Motor neuron (in vitro differentiated cells): ENCODE measurements at regions of chr4 and their contacts with region 1.

Region 1: GRCh38 chr4:83771113-83771705 is 235.3 kb downstream of the GPAT3 start:
- ATAC-seq: peak; percentile 87 to 96 (median 90)
- H3K4me3 ChIP-seq: no peak overlapping the region
- H3K27ac ChIP-seq: no peak overlapping the region
- H3K4me1 ChIP-seq: peaks cover 2 to 22% of the 10 kb centered on the region in 2 donors

Region 2: GRCh38 chr4:82373816-82374625 is 1397.2 kb before region 1 on chr4 and contains the start of gene HNRNPD:
- in situ Hi-C with region 1: no loop called
- ATAC-seq: peak; percentile 82 to 97 (median 95)
- H3K4me3 ChIP-seq: peak within 1 kb of the TSS; percentile 60 to 91 (median 78)
- H3K27ac ChIP-seq: peak within 1 kb of the TSS; percentile 94 to 99
- H3K4me1 ChIP-seq: peaks cover 5 to 27% of the 10 kb centered on the region in 2 donors
- total RNA-seq, gene HNRNPD: 41.5 to 343 (median 120) TPM

Region 3: DNA sequence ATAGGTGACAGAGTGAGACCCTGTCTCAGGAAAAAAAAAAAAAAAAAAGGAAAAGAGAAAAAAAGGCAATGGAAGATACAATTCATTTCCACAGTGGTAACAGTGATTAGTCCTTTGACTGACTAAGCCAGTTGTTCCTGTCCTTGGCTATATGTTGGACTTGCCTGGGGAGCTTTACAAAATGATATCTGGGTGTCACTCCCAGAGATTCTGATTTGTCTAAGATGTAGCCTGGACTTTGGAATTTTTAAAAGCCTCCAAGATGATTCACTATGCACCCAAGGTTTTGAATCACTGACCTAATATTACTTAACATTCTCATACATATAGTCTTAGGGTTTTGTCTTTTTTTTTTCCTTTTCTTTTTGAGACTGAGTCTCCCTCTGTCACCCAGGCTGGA is 332.5 kb before region 1 on chr4:
- in situ Hi-C with region 1: no loop called
- ATAC-seq: no peak
- H3K4me3 ChIP-seq: no peak overlapping the region
- H3K27ac ChIP-seq: no peak overlapping the region
- H3K4me1 ChIP-seq: no peaks in the 10 kb centered on the region

Region 4: GRCh38 chr4:83516042-83516772 is 255.0 kb before region 1 on chr4:
- in situ Hi-C with region 1: loop called in 1 of 9 experiments (anchors 25 kb)
- ATAC-seq: peak in 1 of 8 experiments; percentile 30
- H3K4me3 ChIP-seq: no peak overlapping the region
- H3K27ac ChIP-seq: no peak overlapping the region
- H3K4me1 ChIP-seq: no peaks in the 10 kb centered on the region

Region 5: GRCh38 chr4:83658806-83659495 is 112.3 kb before region 1 on chr4:
- in situ Hi-C with region 1: loop called in 2 of 9 experiments (anchors 25 kb)
- ATAC-seq: no peak
- H3K4me3 ChIP-seq: no peak overlapping the region
- H3K27ac ChIP-seq: no peak overlapping the region
- H3K4me1 ChIP-seq: no peaks in the 10 kb centered on the region

Region 6: DNA sequence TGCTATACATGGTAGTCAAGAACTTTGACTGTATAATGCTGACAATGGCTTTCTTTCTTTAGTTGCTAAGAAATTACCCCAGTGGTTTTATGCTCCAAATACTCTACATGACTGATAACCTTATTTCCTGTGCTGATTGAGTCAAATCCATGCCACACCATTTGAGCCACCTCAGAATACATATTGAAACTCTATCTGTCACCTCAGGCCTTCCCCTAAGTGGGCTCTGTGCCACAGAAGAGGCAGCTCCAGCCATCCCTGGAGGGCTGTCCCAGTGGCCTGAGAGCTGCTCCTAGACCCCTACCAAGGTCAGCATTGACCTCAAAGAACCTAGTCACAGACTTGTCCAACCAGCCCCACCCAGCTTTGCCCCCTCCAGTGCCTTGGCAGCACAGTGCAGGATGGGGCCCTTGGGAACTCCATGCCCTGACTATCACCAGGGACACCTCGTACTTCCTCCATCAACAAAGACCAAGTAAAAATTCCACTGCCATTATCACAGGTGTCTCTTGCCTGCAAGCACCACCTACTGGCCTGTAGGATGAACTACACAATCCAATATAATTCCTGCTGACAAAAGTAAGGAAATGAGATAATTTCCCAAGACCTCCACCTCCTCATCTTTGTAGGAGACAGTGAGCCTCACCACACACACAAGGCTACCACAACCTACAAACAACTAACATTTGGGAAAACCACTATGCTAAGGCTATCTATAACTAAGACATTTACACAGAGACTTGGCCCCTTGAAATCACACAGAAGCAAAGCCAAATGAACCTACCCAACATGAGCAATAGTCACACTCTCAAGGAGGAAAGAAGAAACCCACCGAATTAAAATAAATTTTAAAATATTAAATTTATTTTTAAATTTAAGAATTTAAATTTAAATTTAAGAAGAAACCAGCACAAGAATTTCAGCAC is 488.0 kb after region 1 on chr4:
- in situ Hi-C with region 1: loop called in 1 of 9 experiments (anchors 25 kb)
- ATAC-seq: peak in 3 of 8 experiments; percentile 35 to 45 (median 39)
- H3K4me3 ChIP-seq: no peak overlapping the region
- H3K27ac ChIP-seq: no peak overlapping the region
- H3K4me1 ChIP-seq: no peaks in the 10 kb centered on the region